SK-N-SH (cell line): ENCODE measurements at regions of chr17 and their contacts with region 1.

Region 1: GRCh38 chr17:57783106-57783742 is 38.1 kb upstream of the CCDC182 start:
- DNase-seq: peak; percentile 98
- H3K4me3 ChIP-seq: peak overlapping the region in 1 of 2 experiments; percentile 55; a peak in 2 of 4 replicates
- H3K27ac ChIP-seq: peak overlapping the region in 1 of 2 experiments; percentile 99; a peak in 2 of 4 replicates
- H3K4me1 ChIP-seq: peaks cover 0 to 40% of the 10 kb centered on the region in 2 experiments; a peak in 3 of 4 replicates
- H3K27me3 ChIP-seq: peaks cover 22% of the 10 kb centered on the region
- CTCF ChIP-seq: peak; percentile 94
- EP300 ChIP-seq: peak in 1 of 2 experiments; percentile 65; a peak in 2 of 4 replicates
- RAD21 ChIP-seq: peak; percentile 97

Region 2: GRCh38 chr17:57121338-57122042 is 661.7 kb before region 1 on chr17:
- CTCF ChIA-PET with region 1: interaction called, 28 read pairs
- POLR2A ChIA-PET with region 1: no interaction called
- DNase-seq: peak; percentile 80
- H3K4me3 ChIP-seq: no peak overlapping the region
- H3K27ac ChIP-seq: peak overlapping the region in 1 of 2 experiments; percentile 29; a peak in 1 of 4 replicates
- H3K4me1 ChIP-seq: peaks cover 0 to 17% of the 10 kb centered on the region in 2 experiments; a peak in 1 of 4 replicates
- H3K27me3 ChIP-seq: no peaks in the 10 kb centered on the region
- CTCF ChIP-seq: peak; percentile 73
- EP300 ChIP-seq: no peak
- RAD21 ChIP-seq: peak; percentile 76

Region 3: GRCh38 chr17:57535249-57535966 is 247.8 kb before region 1 on chr17:
- CTCF ChIA-PET with region 1: interaction called, 141 read pairs
- POLR2A ChIA-PET with region 1: interaction called, 7 read pairs
- DNase-seq: peak; percentile 71
- H3K4me3 ChIP-seq: no peak overlapping the region
- H3K27ac ChIP-seq: peak overlapping the region in 1 of 2 experiments; percentile 100; a peak in 2 of 4 replicates
- H3K4me1 ChIP-seq: peaks cover 34 to 96% of the 10 kb centered on the region in 2 experiments
- H3K27me3 ChIP-seq: no peaks in the 10 kb centered on the region
- CTCF ChIP-seq: no peak
- EP300 ChIP-seq: peak in 1 of 2 experiments; percentile 88; a peak in 2 of 4 replicates
- RAD21 ChIP-seq: 0 out of 2 replicates have a peak, but pooled peaks have one; percentile 23

Region 4: GRCh38 chr17:57604771-57605674 is 178.2 kb before region 1 on chr17:
- CTCF ChIA-PET with region 1: interaction called, 129 read pairs
- POLR2A ChIA-PET with region 1: interaction called, 26 read pairs
- DNase-seq: peak; percentile 89
- H3K4me3 ChIP-seq: peak overlapping the region in 1 of 2 experiments; percentile 18; a peak in 1 of 4 replicates
- H3K27ac ChIP-seq: peak overlapping the region; percentile 59 to 99; a peak in 3 of 4 replicates
- H3K4me1 ChIP-seq: peaks cover 26 to 90% of the 10 kb centered on the region in 2 experiments
- H3K27me3 ChIP-seq: no peaks in the 10 kb centered on the region
- CTCF ChIP-seq: no peak; the same call in 1 of the 2 replicates
- EP300 ChIP-seq: peak in 1 of 2 experiments; percentile 51; a peak in 2 of 4 replicates
- RAD21 ChIP-seq: peak; percentile 56

Region 5: DNA sequence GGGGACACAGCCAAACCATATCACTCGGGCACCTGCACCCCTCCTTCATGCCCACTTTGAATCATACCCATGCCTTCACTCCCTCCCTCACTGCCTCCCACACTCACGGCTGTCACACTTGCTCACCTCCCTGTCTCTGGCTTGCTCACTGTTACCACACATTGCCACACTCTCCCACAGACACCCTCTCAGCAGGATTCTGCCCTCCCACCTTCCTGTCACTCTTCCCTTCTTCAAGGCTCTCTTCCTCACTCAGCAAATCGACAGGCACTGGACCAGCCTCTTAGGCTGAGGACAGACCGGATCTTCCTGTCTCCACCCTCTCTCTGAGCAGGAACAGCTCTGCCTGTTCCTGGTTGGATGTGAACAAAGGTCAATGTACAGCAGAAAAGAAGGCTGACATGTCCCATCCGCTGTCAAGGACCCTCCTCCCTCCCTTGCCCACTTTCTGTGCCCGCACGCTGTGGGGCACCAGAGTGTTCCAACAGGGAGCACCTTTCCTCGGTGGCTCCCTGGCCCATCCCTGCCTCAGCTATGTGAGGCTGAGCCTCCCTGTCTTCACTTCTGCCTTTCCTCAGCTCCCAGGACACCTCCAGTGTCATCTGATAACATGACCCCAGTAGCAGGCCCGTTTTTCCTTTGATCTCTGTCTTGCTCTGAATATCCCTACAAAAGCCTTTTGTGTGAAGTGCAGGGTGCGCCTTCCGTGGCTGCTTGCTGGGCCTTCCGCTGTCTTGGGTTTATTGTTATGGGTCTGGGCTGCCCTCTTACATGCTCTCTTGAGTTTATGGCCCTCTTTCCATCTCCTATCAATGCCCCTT is 85.1 kb before region 1 on chr17:
- CTCF ChIA-PET with region 1: interaction called, 19 read pairs
- POLR2A ChIA-PET with region 1: interaction called, 3 read pairs
- DNase-seq: no peak
- H3K4me3 ChIP-seq: no peak overlapping the region
- H3K27ac ChIP-seq: no peak overlapping the region; a peak in 1 of 4 replicates
- H3K4me1 ChIP-seq: peaks cover 0 to 22% of the 10 kb centered on the region in 2 experiments; a peak in 2 of 4 replicates
- H3K27me3 ChIP-seq: no peaks in the 10 kb centered on the region
- CTCF ChIP-seq: no peak
- EP300 ChIP-seq: no peak
- RAD21 ChIP-seq: no peak

Region 6: GRCh38 chr17:57794841-57795240 is 11.6 kb after region 1 on chr17:
- CTCF ChIA-PET with region 1: interaction called, 44 read pairs
- POLR2A ChIA-PET with region 1: interaction called, 3 read pairs
- DNase-seq: no peak
- H3K4me3 ChIP-seq: no peak overlapping the region
- H3K27ac ChIP-seq: no peak overlapping the region
- H3K4me1 ChIP-seq: no peaks in the 10 kb centered on the region
- H3K27me3 ChIP-seq: peaks cover 9% of the 10 kb centered on the region
- CTCF ChIP-seq: no peak
- EP300 ChIP-seq: no peak
- RAD21 ChIP-seq: no peak

Region 7: DNA sequence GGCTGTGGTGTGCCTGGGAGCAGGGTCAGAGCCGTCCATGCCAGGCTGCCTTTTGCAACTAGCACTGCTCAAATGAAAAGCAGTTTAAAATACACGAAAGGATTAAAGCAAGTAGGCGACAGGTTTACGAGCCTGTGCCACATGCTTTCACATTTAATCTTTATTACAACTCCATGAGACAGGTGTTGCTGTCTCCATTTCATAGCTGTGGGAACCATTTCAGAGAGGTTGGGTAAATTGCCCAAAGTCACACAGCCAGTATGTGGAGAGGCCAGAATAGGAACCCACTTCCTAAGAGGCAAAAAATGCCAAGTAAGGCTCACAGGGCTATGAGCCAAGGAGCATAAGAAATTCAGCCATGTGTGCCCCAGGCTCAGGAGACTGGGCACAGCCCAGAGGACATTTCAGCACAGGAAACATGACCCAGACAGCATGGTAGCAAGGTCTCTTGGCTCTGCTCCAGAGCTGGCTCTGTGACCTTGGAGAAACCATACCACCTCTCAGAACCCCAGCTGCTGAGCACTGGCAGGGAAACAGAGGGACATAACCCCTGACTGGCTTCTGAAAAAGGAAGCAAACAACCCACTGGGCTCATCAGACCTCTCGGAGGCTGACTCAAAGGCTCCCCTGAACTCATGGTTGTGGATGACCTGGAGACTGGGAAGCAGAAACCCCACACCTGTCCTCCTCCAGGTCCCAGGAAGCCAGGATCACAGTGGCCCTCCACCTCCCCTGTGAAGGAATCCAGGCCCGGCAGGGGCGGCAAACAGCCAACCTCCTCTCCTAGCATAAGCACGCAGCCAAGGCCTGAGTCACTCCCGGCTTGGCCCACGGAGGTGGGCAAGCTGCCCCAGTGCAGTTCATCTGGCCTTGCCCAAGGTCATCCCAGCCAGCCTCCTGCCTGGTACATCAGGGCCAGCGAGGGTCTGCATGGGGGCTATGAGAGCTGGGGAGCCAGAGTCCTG is 107.0 kb after region 1 on chr17:
- CTCF ChIA-PET with region 1: no interaction called
- POLR2A ChIA-PET with region 1: no interaction called
- DNase-seq: peak; percentile 66
- H3K4me3 ChIP-seq: no peak overlapping the region
- H3K27ac ChIP-seq: peak overlapping the region; percentile 82 to 96
- H3K4me1 ChIP-seq: peaks cover 32 to 55% of the 10 kb centered on the region in 2 experiments
- H3K27me3 ChIP-seq: no peaks in the 10 kb centered on the region
- CTCF ChIP-seq: peak; percentile 14; the same call in 1 of the 2 replicates
- EP300 ChIP-seq: peak; percentile 39 to 93; a peak in 2 of 4 replicates
- RAD21 ChIP-seq: no peak

Region 8: GRCh38 chr17:57902800-57903759 is 119.9 kb after region 1 on chr17:
- CTCF ChIA-PET with region 1: no interaction called
- POLR2A ChIA-PET with region 1: no interaction called
- DNase-seq: no peak
- H3K4me3 ChIP-seq: no peak overlapping the region
- H3K27ac ChIP-seq: peak overlapping the region; percentile 43 to 86
- H3K4me1 ChIP-seq: peaks cover 49 to 53% of the 10 kb centered on the region in 2 experiments; a peak in 3 of 4 replicates
- H3K27me3 ChIP-seq: no peaks in the 10 kb centered on the region
- CTCF ChIP-seq: no peak
- EP300 ChIP-seq: peak in 1 of 2 experiments; percentile 67; a peak in 1 of 4 replicates
- RAD21 ChIP-seq: no peak

Region 9: GRCh38 chr17:58219001-58219788 is 436.0 kb after region 1 on chr17 and contains the start of gene MKS1:
- CTCF ChIA-PET with region 1: no interaction called
- POLR2A ChIA-PET with region 1: no interaction called
- DNase-seq: peak; percentile 100
- H3K4me3 ChIP-seq: peak within 1 kb of the TSS; percentile 79 to 87
- H3K27ac ChIP-seq: peak within 1 kb of the TSS; percentile 48 to 66
- H3K4me1 ChIP-seq: peaks cover 2 to 10% of the 10 kb centered on the region in 2 experiments; a peak in 1 of 4 replicates
- H3K27me3 ChIP-seq: no peaks in the 10 kb centered on the region
- CTCF ChIP-seq: peak; percentile 61
- EP300 ChIP-seq: no peak
- RAD21 ChIP-seq: no peak
- polyA plus RNA-seq, gene MKS1: 28.5 and 32.8 TPM in 2 replicates